Caco-2 (cell line): ENCODE measurements at regions of chr5 and their contacts with region 1.

Region 1: DNA sequence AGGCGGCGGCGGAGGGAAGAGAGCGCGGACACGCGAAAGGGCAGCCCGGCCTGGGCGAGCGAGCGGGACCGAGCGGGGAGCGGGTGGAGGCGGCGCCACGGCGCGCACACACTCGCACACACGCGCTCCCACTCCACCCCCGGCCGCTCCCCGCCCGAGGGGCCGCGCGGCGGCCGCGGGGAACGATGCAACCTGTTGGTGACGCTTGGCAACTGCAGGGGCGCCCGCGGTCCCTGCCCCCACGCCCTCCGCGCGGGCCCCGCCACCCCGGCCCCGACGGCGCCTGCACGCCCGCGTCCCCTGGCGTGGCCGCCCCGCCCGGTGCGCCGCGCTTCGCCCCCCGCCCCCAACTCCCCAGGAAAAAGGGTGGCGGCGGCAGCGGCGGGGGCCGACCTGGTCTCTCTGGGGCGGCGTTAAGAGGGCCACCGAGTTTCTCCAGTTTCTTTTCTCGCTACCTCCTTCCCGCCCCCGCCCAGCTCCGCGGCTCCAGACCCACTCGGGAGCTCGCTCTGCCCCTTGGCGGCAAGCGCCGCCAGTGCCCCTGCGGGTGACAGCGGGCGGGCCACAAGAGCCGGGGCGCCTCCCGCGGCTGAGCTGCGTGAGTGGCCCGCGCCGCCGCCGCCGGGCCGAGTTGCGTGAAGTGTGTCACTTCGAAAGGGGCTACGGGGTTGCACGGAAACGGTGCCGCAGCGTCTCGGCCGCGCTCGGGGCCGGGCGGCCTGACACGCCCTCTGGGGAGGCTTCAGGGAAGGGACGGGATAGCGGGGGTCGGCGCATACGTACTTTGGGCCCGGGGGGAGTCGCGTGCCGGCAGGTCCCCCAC is at the start of gene NR3C1:
- DNase-seq: peak; percentile 57 to 78
- H3K4me3 ChIP-seq: peak within 1 kb of the TSS; percentile 90
- H3K4me3 Mint-ChIP-seq: peak within 1 kb of the TSS; percentile 77
- H3K27ac Mint-ChIP-seq: peak within 1 kb of the TSS; percentile 15
- H3K4me1 ChIP-seq: no peaks in the 10 kb centered on the region
- H3K4me1 Mint-ChIP-seq: peaks cover 13% of the 10 kb centered on the region
- H3K27me3 ChIP-seq: no peaks in the 10 kb centered on the region; the same call in 1 of the 2 replicates
- H3K27me3 Mint-ChIP-seq: no peaks in the 10 kb centered on the region
- CTCF ChIP-seq: peak; percentile 36 to 57
- total RNA-seq, gene NR3C1: 15.4 and 17.5 TPM in 2 replicates

Region 2: GRCh38 chr5:143413958-143414669 is 10.3 kb after region 1 on chr5:
- CTCF ChIA-PET with region 1: no interaction called
- POLR2A ChIA-PET with region 1: no interaction called
- intact Hi-C with region 1: no loop called
- DNase-seq: no peak
- H3K4me3 ChIP-seq: no peak overlapping the region
- H3K4me3 Mint-ChIP-seq: no peak overlapping the region
- H3K27ac Mint-ChIP-seq: no peak overlapping the region
- H3K4me1 ChIP-seq: peaks cover 31% of the 10 kb centered on the region
- H3K4me1 Mint-ChIP-seq: peaks cover 35% of the 10 kb centered on the region
- H3K27me3 ChIP-seq: no peaks in the 10 kb centered on the region
- H3K27me3 Mint-ChIP-seq: no peaks in the 10 kb centered on the region
- CTCF ChIP-seq: no peak

Region 3: GRCh38 chr5:143679777-143680176 is 276.0 kb after region 1 on chr5:
- CTCF ChIA-PET with region 1: no interaction called
- POLR2A ChIA-PET with region 1: no interaction called
- intact Hi-C with region 1: loop called (anchors 5 kb)
- DNase-seq: no peak
- H3K4me3 ChIP-seq: no peak overlapping the region
- H3K4me3 Mint-ChIP-seq: no peak overlapping the region
- H3K27ac Mint-ChIP-seq: peak overlapping the region; percentile 17
- H3K4me1 ChIP-seq: peaks cover 46% of the 10 kb centered on the region
- H3K4me1 Mint-ChIP-seq: peaks cover 34% of the 10 kb centered on the region
- H3K27me3 ChIP-seq: no peaks in the 10 kb centered on the region
- H3K27me3 Mint-ChIP-seq: no peaks in the 10 kb centered on the region
- CTCF ChIP-seq: no peak